GM10248 (cell line): ENCODE measurements at regions of chr11 and their contacts with region 1.

Region 1: DNA sequence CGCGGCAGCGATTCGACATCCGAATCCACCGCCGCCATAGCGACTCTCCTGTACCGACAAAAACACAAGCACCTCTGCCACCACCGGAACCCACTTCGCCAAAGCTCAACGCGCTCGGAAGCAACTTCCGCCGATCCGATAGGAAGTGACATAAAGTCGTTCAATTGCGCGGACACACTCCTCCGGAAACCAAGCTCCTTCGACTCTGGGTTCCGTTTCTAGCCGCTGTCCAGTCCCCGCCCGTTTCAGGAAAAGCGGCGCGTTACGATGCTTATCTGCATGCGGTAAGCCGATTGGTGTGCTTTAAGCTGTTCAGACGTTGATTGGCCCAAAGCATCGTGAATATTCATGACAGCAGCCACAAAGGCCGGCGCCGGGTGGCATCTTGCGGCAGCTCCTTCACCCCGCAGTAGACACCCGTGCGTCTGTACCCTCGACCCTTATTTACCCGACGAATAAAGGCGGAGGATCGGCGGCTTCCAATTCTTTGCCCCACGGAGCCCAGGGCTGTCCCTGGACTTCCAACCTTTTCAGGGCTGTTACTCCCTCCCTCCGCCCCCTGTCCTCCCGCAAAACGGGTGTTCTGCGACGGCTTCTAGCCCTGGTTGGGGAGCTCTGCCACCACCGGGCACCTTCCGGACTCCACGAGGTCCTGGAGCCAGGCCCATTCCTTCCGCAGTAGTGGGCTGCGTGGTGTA is at the start of gene TUT1:
- DNase-seq: peak; percentile 91
- CTCF ChIP-seq: no peak

Region 2: DNA sequence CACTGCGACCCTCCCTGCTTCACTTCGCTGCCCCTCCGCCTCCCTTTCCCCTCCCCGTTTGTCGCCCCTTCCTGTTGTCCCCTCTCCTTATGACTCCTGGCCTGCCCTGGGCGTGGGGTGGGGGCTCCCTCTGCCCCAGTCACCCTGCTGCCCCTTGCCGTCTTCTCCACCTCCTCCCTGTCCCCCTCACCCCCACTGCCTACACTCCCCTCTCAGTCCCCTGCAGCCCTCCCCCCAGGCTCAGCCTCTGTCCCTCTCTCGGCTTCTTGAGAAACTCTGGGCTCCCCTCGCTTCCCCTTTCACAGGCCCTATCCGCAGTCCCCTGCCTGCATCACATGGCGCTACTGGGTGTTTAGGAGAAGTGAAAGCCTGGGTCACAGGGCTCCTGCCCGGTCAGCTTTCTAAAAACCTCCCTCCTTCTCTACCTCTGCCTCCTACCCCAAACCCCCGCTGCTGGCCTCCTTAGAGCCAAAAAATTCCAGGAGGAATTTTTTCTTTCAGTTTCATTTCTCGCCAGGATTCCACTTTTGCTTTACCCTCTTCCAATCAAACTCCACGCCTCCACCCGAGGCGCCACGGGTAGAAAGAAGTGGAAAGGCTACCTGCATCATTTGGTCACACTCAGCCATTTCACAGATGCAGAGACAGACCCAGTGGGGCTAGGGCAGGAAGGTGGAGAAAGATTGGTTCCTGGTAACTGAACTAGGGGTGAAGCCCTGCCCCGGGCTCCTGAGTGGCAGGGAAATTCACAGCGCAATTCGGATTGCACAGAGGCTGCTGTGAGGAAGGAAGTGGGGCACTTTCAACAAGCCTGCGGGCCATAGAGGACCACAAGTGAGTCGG is 1639.5 kb before region 1 on chr11 and contains the start of gene SLC15A3:
- CTCF ChIA-PET with region 1: no interaction called
- POLR2A ChIA-PET with region 1: no interaction called
- DNase-seq: peak; percentile 88
- CTCF ChIP-seq: no peak

Region 3: DNA sequence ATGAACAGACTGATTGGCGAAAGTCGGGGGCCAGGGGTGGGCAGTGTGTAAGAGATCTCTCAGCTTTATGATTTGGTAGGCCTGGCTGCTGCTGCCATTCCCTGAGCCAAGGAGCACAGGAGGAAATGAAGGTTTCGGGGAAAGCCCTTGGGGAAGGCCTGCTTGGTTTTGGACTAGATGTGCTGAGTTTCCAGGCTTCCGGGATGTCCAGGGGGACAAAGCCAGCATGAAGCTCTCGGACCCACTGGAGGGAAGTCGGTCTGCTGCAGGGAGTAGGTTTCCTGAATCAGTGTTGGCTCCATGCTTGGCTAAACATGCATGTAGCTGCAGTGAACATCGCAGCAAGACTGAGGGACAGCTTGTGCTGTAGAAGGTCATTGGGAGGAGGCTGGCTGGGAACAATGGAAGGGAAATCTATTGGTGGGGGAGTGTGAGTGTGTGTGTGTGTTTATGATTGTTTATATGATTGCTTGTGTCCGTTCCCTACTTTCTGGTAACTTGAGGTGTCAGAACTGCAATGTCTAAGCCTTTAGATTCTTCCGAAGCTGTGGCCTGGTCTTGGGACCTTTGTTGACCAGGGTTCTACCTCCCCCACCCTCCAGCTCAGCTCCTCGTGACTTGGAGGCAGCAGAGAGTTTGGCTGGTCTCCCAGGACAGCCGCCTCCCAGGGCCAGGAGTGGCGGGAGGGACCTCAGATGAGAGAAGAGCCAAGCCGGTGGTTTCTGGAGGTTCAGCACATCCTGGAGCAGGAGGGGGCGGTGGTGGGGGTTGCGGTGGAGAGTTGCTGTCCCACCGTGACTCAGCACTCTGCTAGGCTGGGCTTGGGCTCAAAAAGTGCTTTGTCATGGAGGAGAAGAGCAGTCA is 620.1 kb before region 1 on chr11:
- CTCF ChIA-PET with region 1: no interaction called
- POLR2A ChIA-PET with region 1: no interaction called
- DNase-seq: peak; percentile 70
- CTCF ChIP-seq: no peak

Region 4: GRCh38 chr11:62427630-62428233 is 163.9 kb before region 1 on chr11:
- CTCF ChIA-PET with region 1: interaction called, 22 read pairs
- POLR2A ChIA-PET with region 1: interaction called, 4 read pairs
- DNase-seq: peak; percentile 38
- CTCF ChIP-seq: no peak

Region 5: DNA sequence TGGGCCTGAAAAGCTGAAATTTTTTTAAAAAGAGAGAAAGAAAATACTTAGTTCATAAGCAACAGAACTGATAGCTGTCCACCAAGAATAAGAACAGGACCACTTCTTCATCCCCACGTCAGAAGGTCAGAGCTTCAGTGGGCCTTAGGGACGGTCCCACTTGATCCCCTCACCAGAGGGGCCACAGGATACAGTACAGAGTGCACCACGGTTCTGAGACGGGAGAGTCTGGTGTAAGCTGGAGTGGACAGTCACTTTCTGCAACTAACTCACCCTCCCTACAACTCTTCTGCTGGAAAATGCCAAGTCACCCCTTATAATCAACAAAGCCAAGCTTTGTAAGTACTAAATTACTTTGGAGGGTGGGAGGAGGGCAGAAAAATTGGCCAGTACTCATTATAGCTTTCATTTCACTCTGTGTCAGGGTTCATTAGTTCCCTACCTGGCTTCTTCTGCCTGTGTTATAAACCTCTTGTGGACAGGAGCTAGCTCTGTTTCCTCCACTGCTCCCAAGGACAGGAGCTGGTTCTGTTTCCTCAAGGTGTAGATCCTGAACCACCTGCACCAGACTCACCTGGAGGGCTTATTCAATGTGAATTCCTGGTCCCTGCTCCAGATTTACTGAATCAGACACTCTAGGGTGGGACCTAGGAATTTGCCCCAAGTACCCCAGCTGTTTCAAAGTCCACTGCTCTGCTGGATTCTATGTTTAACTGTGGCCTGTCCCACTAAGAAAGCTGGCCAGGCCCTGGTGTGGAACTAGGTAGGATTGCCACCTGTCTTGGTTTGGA is 133.2 kb before region 1 on chr11:
- CTCF ChIA-PET with region 1: no interaction called
- POLR2A ChIA-PET with region 1: no interaction called
- DNase-seq: no peak
- CTCF ChIP-seq: no peak

Region 6: DNA sequence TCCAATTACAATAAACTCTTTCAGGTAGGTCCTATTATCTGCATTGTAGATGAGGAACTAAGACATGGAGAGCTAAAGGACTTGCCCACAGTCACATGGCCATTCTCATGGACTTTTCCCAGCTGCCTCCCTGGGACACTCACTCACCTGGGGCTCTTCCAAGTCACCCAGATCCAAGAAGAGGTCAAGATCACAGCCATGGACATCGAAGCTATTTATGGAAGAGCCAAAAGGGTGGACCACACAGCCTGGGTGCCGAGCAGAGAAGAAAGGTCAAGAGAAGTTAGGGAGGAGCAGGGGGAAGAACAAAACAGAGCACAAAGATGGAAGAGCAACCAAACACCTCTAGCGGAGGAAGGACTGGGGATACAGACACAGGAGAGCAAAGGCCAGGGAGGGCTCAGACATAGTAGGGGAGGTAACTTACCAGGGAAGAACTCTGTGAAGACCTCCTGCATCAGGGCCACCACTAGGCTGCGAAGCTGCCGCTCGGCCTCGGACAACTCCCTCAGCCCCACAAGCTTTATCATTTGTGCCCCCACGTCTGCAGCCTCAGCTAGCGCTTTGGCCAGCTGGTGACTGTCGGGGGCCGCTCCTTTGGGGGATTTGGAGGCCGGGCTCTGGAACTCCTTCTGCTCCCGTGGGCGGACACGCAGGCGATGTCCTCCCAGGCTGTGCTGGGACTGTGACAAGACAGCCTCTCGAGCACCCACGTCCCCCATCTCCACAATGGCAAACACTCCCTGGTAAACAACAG is 10.5 kb before region 1 on chr11:
- CTCF ChIA-PET with region 1: interaction called, 7 read pairs
- POLR2A ChIA-PET with region 1: interaction called, 87 read pairs
- DNase-seq: no peak
- CTCF ChIP-seq: no peak

Region 7: GRCh38 chr11:62645956-62646824 is 54.6 kb after region 1 on chr11 and contains the start of gene GANAB:
- CTCF ChIA-PET with region 1: interaction called, 5 read pairs
- POLR2A ChIA-PET with region 1: interaction called, 10 read pairs
- DNase-seq: peak; percentile 100
- CTCF ChIP-seq: no peak

Region 8: GRCh38 chr11:62694455-62695167 is 103.0 kb after region 1 on chr11:
- CTCF ChIA-PET with region 1: interaction called, 24 read pairs
- POLR2A ChIA-PET with region 1: no interaction called
- DNase-seq: peak; percentile 82
- CTCF ChIP-seq: peak; percentile 84

Region 9: GRCh38 chr11:62787005-62787759 is 195.6 kb after region 1 on chr11 and contains the start of gene TMEM179B:
- CTCF ChIA-PET with region 1: interaction called, 11 read pairs
- POLR2A ChIA-PET with region 1: interaction called, 4 read pairs
- DNase-seq: peak; percentile 96
- CTCF ChIP-seq: peak; percentile 65

Region 10: DNA sequence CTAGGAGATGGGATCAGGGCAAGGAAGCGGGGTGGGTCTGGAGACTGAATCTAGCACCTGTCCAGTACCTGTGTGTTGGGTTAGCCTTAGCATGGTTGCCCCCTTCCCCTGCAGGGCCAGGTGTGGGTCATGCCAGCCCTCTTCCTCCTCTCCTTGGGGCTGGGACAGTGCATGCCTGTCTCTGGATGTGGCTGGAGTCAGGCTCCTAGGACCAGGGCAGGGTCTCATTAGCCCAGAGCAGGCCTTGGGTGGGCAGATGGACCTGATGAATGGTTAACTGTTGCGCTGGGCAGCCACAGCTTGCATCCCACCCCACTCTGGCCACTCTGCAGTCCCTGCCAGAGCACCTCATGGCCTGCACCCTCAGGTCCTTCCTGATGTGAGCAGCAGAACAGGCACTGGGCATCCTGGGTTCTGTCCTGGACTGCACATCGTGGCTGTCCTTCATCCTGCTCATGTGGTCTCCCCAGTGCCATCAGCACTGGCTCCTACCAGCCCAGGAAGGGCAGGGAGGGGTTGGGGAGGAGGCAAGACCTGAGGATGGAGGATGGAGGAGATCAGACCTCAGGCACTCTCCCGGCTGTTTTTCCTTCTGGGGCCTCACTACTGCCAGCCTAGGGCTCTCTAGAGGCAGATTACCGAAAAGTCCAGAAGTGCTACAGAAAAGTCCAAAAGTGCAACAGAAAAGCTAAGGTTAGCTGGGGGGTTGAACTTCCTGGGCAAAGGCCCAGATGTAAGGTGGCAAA is 342.3 kb after region 1 on chr11:
- CTCF ChIA-PET with region 1: no interaction called
- POLR2A ChIA-PET with region 1: no interaction called
- DNase-seq: no peak
- CTCF ChIP-seq: no peak